Prostate gland (tissue), 2 donors: ENCODE measurements at regions of chr20 and their contacts with region 1.

Region 1: DNA sequence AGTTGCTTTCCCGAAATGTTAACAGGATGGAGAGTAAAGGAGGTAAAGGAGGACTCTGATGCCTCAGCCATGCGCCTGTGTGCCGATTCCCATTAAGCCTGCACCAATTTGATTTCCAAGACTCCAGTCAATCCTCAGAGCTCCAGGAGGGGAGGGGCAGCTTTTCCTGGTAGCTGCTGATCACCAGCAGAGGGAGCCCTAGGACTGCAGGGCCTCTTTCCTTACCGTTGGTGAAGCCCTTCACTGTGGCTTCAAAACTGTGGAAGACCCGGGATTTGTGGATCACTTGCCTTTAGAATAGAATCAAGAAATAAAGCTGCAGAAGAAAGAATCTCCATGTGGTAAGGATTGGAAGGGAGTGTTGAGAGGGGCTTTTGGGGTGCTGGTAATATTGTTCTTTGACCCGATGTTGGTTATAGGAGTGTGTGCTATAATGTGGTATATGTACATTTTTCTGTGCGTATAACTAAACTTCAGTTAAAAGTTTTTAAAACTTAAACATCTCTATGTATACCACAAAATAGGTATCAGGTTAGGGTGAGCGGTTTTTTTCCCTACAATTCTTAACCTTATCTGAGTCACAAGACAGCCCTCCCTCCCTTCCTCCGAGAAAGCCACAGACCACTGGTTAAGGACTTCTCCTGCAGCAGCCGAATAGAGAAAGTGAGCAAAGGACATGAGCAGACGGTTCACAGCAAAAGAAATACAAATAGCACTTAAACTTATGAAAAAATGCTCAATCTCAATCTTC is 6.9 kb upstream of the OSER1 start:
- DNase-seq: peak; percentile 74
- H3K4me3 ChIP-seq: no peak overlapping the region
- H3K27ac ChIP-seq: no peak overlapping the region
- H3K4me1 ChIP-seq: no peaks in the 10 kb centered on the region
- H3K27me3 ChIP-seq: no peaks in the 10 kb centered on the region
- CTCF ChIP-seq: peak; percentile 58 to 91 (median 86)
- POLR2A ChIP-seq: no peak

Region 2: DNA sequence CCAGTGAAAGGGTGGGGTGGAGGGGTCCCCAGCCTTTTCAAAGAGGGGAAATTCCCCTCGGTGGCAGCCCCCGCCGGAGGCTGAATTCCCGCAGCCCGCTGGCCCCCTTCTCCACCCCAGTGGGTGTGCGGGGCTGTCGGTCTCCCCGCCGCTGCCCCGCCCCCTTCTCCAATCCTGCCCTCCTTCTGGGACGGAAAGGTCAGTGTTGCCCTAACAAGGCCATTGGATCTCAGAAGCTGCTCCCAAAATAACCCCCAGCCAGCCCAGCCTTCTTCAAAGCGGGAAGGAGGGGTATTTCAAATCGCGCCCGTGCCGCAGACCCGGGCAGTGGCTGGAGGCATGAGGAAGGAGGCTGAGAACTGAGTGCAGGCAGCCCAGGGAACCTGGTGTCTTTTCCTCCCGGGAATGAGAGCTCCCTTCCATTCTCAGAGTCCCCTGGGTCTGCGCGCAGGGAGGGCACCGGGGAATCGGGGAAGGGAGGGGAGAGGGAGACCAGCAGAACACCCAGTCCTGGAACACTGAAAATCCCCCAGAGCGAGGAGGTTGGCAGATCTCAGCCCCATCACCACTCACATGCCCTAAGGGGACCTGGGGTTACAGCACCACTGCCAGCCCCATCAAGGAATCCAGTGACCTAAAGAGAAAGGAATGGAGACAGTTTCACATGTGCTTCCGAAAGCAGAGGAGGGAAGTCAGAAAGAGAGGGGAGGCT is 30.3 kb before region 1 on chr20 and contains the start of gene JPH2:
- intact Hi-C with region 1: no loop called
- DNase-seq: no peak
- H3K4me3 ChIP-seq: peak within 1 kb of the TSS; percentile 27 to 31
- H3K27ac ChIP-seq: peak within 1 kb of the TSS; percentile 62 to 66
- H3K4me1 ChIP-seq: peaks cover 8% of the 10 kb centered on the region
- H3K27me3 ChIP-seq: peaks cover 2% of the 10 kb centered on the region
- CTCF ChIP-seq: no peak
- POLR2A ChIP-seq: no peak
- total RNA-seq, gene JPH2: 29.1 to 31.1 TPM

Region 3: GRCh38 chr20:44310664-44311639 is 93.4 kb after region 1 on chr20 and contains the start of gene FITM2:
- intact Hi-C with region 1: loop called (anchors 1 kb)
- DNase-seq: peak; percentile 97
- H3K4me3 ChIP-seq: peak within 1 kb of the TSS; percentile 68 to 92
- H3K27ac ChIP-seq: peak within 1 kb of the TSS; percentile 52 to 67
- H3K4me1 ChIP-seq: peaks cover 7% of the 10 kb centered on the region
- H3K27me3 ChIP-seq: no peaks in the 10 kb centered on the region
- CTCF ChIP-seq: peak; percentile 87 to 99 (median 98)
- POLR2A ChIP-seq: peak; percentile 48
- total RNA-seq, gene FITM2: 11.6 to 24.2 TPM

Region 4: DNA sequence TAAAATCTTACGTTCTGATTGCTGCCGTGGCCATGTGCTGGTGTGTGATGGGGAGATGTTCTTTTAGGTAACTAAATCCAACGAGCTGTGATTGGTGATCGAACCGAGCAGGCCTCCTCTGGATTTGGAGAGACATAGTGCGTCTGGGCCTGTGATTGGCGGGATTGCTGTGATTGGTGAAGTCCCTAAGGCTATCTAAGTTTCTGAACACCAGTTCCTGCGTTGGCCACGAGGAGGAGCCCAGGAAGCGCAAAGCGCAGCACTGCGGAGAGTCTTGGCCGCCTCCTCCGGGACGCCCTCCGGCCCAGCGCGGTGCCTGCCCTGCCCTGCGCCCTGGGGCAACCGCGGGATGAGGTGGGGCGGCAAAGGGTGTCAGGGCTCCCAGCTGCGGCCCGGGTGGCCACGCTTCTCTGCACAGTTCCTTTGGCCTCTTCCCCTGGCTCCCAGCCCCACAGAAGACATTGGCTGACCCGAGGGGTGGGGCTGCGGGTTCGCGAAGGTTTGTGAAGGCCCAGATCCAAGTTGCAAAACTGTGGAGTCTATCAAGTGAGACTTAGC is 171.0 kb after region 1 on chr20:
- intact Hi-C with region 1: loop called (anchors 5 kb)
- DNase-seq: peak; percentile 32
- H3K4me3 ChIP-seq: no peak overlapping the region
- H3K27ac ChIP-seq: no peak overlapping the region
- H3K4me1 ChIP-seq: no peaks in the 10 kb centered on the region
- H3K27me3 ChIP-seq: peaks cover 3% of the 10 kb centered on the region
- CTCF ChIP-seq: peak; percentile 55 to 80 (median 60)
- POLR2A ChIP-seq: no peak

Region 5: GRCh38 chr20:44460795-44461141 is 243.3 kb after region 1 on chr20:
- intact Hi-C with region 1: loop called (anchors 2 kb)
- DNase-seq: no peak
- H3K4me3 ChIP-seq: no peak overlapping the region
- H3K27ac ChIP-seq: peak overlapping the region in 1 of 2 donors; percentile 5
- H3K4me1 ChIP-seq: peaks cover 3% of the 10 kb centered on the region
- H3K27me3 ChIP-seq: no peaks in the 10 kb centered on the region
- CTCF ChIP-seq: peak in 3 of 4 experiments; percentile 15 to 49 (median 31)
- POLR2A ChIP-seq: no peak